Activated CD8-positive, alpha-beta T cell treated with anti-CD3 and anti-CD28 coated beads for 36 hours (primary cell): ENCODE measurements at regions of chr5 and their contacts with region 1.

Region 1: DNA sequence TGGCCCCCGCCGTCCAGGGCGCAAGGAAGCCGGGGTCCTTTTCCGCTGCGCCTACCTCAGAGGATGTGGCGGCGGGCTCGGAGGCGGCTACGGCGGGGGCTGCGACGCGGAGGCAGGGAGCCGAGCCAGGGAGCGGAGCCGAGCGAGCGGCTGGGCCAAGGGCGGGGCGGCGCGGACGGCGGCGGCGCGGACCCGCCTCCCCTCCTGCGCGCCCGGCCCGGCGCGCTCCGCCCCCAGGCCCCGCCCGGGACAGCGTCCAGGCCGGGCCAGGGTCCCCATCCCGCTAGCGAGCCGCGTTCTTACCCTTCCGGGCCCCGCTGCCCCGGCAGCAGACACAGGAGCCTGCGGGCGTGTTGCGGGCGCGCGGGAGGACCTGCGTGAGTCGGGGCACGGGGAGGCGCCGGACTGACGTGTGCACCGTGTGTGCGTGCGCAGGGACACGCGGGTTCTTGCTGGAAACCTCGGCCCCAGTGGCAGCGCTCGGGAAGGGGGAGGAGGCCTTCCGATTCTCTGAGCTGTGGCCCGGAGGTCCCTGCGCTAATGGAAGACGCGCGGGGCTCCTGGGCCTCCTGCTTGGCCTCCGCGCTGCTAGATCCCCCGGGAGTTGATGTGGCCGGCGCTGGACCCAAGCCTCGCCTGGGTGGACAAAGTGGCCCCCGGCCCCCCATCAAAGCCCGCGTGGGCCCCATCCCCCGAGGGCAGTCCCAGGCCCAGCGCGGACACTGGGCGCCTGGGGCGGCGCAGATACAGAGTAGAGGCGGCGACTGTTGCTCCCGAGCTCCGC is at the start of gene VDAC1:
- DNase-seq: peak; percentile 89
- ATAC-seq: peak; percentile 85
- H3K4me3 Mint-ChIP-seq: peak within 1 kb of the TSS; percentile 95
- H3K27ac Mint-ChIP-seq: peak within 1 kb of the TSS; percentile 99
- H3K4me1 Mint-ChIP-seq: peaks cover 39% of the 10 kb centered on the region
- H3K27me3 Mint-ChIP-seq: no peaks in the 10 kb centered on the region
- CTCF ChIP-seq: no peak
- total RNA-seq, gene VDAC1: 481 to 484 TPM

Region 2: GRCh38 chr5:133968049-133968980 is 36.5 kb before region 1 on chr5 and contains the start of gene C5orf15:
- CTCF ChIA-PET with region 1: no interaction called
- POLR2A ChIA-PET with region 1: interaction called, 20 read pairs
- intact Hi-C with region 1: no loop called
- DNase-seq: peak; percentile 99
- ATAC-seq: peak; percentile 97
- H3K4me3 Mint-ChIP-seq: peak within 1 kb of the TSS; percentile 98
- H3K27ac Mint-ChIP-seq: peak within 1 kb of the TSS; percentile 95
- H3K4me1 Mint-ChIP-seq: peaks cover 53% of the 10 kb centered on the region
- H3K27me3 Mint-ChIP-seq: no peaks in the 10 kb centered on the region
- CTCF ChIP-seq: no peak
- total RNA-seq, gene C5orf15: 27.4 to 30.8 TPM

Region 3: DNA sequence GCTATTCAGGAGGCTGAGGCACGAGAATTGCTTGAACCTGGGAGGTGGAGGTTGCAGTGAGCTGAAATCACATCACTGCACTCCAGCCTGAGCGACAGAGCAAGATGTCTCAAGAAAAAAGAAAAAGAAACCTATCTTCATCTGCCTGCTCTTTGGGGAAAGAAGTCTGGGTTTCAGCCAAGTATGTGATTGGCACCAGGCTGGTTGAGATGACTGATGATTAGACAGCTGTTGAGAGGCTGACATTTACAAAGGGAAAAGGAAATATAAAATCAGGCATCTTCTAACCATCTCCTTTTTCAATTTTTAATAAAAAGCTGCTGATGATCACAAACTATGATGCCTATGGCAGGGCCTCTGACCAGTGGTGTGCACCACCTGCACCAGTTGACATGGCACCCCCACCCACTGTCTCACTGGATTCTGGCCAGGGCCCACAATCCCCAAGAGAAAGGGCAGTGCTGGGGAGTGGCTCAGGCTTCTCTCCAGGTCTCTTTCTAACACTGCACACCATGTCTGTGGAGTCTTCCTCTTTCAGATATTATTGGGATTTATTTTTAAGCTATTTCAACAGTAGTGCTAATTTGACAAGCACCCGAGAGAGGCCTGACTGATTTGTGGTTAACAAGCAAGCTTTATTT is 19.1 kb before region 1 on chr5:
- CTCF ChIA-PET with region 1: no interaction called
- POLR2A ChIA-PET with region 1: interaction called, 22 read pairs
- intact Hi-C with region 1: no loop called
- DNase-seq: no peak
- ATAC-seq: no peak
- H3K4me3 Mint-ChIP-seq: no peak overlapping the region
- H3K27ac Mint-ChIP-seq: no peak overlapping the region
- H3K4me1 Mint-ChIP-seq: peaks cover 6% of the 10 kb centered on the region
- H3K27me3 Mint-ChIP-seq: no peaks in the 10 kb centered on the region
- CTCF ChIP-seq: no peak

Region 4: DNA sequence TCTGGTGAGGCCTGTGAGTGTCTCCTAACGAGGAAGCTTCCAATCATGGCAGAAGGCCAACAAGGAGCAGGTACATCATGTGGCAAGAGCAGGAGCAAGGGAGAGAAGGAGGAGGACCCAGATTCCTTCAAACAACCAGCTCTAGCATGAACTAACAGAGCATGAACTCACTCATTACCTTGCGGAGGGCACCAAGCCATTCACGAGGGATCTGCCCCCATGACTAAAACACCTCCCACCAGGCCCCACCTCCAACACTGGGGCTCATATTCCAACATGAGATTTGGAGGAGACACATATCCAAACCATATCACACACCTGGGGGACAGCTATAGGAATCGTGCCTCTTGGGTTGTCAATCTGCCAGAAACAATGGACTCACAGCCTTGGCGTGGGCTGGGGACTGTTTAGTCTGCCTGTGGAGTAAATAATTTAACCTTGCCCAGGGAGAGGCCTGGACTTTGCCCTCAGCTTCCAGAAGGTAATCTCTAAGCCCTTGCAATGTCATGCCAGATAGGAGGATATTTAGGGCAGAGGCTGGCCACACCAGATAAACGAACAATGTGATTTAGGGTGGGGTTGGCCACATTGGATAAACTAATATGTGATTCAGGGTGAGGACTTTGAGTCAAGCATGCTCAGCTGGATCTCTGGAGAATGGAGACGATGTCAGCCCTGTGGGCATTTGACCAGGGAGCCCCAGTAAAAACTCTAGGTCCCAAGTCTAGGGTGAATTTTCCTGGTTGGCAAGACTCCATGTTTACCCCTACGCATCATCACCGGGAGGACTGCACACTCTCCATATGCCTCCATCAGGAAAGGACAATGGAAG is 13.6 kb after region 1 on chr5:
- CTCF ChIA-PET with region 1: no interaction called
- POLR2A ChIA-PET with region 1: interaction called, 16 read pairs
- intact Hi-C with region 1: no loop called
- DNase-seq: no peak
- ATAC-seq: no peak
- H3K4me3 Mint-ChIP-seq: no peak overlapping the region
- H3K27ac Mint-ChIP-seq: no peak overlapping the region
- H3K4me1 Mint-ChIP-seq: no peaks in the 10 kb centered on the region
- H3K27me3 Mint-ChIP-seq: no peaks in the 10 kb centered on the region
- CTCF ChIP-seq: no peak

Region 5: GRCh38 chr5:134026521-134027268 is 21.9 kb after region 1 on chr5:
- CTCF ChIA-PET with region 1: interaction called, 10 read pairs
- POLR2A ChIA-PET with region 1: interaction called, 5 read pairs
- intact Hi-C with region 1: no loop called
- DNase-seq: peak; percentile 73
- ATAC-seq: peak; percentile 99
- H3K4me3 Mint-ChIP-seq: no peak overlapping the region
- H3K27ac Mint-ChIP-seq: no peak overlapping the region
- H3K4me1 Mint-ChIP-seq: no peaks in the 10 kb centered on the region
- H3K27me3 Mint-ChIP-seq: no peaks in the 10 kb centered on the region
- CTCF ChIP-seq: peak; percentile 43